Panc1 (cell line): ENCODE measurements at regions of chr14 and their contacts with region 1.

Region 1: GRCh38 chr14:44720707-44721106 is 213.6 kb upstream of the FSCB start:
- DNase-seq: no peak
- ATAC-seq: no peak
- H3K4me3 ChIP-seq: no peak overlapping the region
- H3K27ac ChIP-seq: no peak overlapping the region
- H3K4me1 ChIP-seq: no peaks in the 10 kb centered on the region
- H3K27me3 ChIP-seq: no peaks in the 10 kb centered on the region
- CTCF ChIP-seq: no peak

Region 2: DNA sequence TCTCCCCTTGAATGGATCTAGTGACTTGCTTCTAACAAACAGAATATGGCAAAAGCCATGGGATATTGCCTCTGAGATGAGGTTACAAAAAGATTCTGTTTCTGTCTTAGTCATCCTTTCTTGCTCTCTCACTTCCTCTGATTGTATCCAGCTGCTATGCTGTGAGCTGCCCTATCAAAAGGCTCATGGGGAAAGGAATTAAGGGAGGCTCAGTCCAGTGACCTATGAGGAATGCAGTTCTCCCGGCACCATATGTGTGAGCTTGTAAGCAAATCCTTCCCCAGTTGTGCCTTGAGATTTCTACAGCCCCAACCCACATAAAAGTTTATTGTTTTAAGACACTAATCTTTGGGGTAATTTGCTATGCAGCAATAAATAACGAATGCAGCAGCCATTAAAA is 57.9 kb after region 1 on chr14:
- CTCF ChIA-PET with region 1: interaction called, 13 read pairs
- POLR2A ChIA-PET with region 1: no interaction called
- in situ Hi-C with region 1: no loop called
- intact Hi-C with region 1: no loop called
- DNase-seq: no peak
- ATAC-seq: no peak
- H3K4me3 ChIP-seq: no peak overlapping the region
- H3K27ac ChIP-seq: no peak overlapping the region
- H3K4me1 ChIP-seq: no peaks in the 10 kb centered on the region
- H3K27me3 ChIP-seq: no peaks in the 10 kb centered on the region
- CTCF ChIP-seq: no peak

Region 3: DNA sequence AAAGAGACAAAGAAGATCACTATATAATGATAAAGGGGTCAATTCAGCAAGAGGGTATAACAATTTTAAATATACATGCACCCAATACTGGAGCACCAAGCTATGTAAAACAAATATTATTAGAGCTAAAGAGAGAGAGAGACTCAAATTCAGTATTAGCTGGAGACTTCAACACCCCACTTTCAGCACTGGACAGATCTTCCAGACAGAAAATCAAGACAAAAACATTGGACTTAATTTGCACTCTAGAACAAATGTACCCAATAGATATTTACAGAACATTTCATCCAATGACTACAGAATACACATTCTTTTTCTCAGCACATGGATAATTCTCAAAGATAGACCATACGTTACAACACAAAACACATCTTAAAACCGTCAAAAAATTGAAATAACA is 160.1 kb after region 1 on chr14:
- CTCF ChIA-PET with region 1: no interaction called
- POLR2A ChIA-PET with region 1: no interaction called
- in situ Hi-C with region 1: no loop called
- intact Hi-C with region 1: no loop called
- DNase-seq: no peak
- ATAC-seq: no peak
- H3K4me3 ChIP-seq: no peak overlapping the region
- H3K27ac ChIP-seq: no peak overlapping the region
- H3K4me1 ChIP-seq: no peaks in the 10 kb centered on the region
- H3K27me3 ChIP-seq: no peaks in the 10 kb centered on the region
- CTCF ChIP-seq: no peak

Region 4: GRCh38 chr14:45070215-45070614 is 349.5 kb after region 1 on chr14:
- CTCF ChIA-PET with region 1: no interaction called
- POLR2A ChIA-PET with region 1: no interaction called
- in situ Hi-C with region 1: no loop called
- intact Hi-C with region 1: no loop called
- DNase-seq: no peak
- ATAC-seq: no peak
- H3K4me3 ChIP-seq: no peak overlapping the region
- H3K27ac ChIP-seq: no peak overlapping the region
- H3K4me1 ChIP-seq: no peaks in the 10 kb centered on the region
- H3K27me3 ChIP-seq: no peaks in the 10 kb centered on the region
- CTCF ChIP-seq: no peak